Endothelial cell of umbilical vein (primary cell): ENCODE measurements at regions of chr12 and their contacts with region 1.

Region 1: DNA sequence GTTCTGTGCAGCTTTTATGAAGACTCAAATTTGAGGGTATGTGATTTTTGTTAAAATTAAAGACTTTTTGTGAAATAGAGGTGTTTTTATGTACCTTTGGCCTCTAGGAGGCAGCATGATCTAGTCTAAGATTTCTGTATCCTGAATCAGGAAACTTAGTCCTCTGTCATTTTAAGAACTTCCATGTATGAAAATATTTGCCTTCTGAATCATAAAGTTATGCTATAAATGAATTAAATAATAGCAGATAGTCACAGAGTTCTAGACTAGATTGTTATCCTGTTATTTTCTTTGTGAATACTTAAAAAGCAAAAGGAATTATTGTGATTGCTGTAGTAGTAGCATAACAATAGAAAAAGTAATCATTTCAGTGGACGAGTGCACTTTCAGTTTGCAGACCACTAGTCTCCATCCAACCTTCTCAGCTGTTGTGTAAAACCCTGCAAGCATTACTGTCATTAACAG is 56.3 kb downstream of the FGD4 start:
- DNase-seq: peak; percentile 91
- H3K4me3 ChIP-seq: peak overlapping the region in 2 of 3 experiments; percentile 50 to 82
- H3K27ac ChIP-seq: peak overlapping the region; percentile 89
- H3K4me1 ChIP-seq: peaks cover 67% of the 10 kb centered on the region
- H3K27me3 ChIP-seq: no peaks in the 10 kb centered on the region
- CTCF ChIP-seq: peak; percentile 44 to 46
- POLR2A ChIP-seq: peak; percentile 35

Region 2: DNA sequence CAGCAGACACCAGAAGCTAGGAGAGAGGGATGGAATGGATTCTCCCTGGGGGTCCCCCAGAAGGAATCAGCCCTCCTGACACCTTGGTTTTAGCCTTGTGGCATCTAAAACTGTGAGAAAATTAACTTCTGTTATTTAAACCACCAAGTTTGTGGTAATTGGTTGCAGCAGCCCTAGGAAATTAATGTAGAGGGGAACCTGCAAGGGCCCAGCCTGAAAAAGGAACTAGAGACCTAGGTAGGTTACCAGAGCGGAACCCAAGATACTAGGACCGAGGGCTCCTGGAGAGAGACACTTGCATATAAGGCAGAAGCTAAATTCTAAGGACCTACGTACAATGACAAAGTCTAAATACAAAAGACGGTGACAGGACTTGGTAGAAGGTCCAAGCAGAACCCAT is 856.6 kb before region 1 on chr12:
- CTCF ChIA-PET with region 1: no interaction called
- POLR2A ChIA-PET with region 1: no interaction called
- dilution Hi-C with region 1: no loop called
- intact Hi-C with region 1: no loop called
- DNase-seq: no peak
- H3K4me3 ChIP-seq: no peak overlapping the region
- H3K27ac ChIP-seq: no peak overlapping the region
- H3K4me1 ChIP-seq: peaks cover 6% of the 10 kb centered on the region
- H3K27me3 ChIP-seq: peaks cover 0 to 2% of the 10 kb centered on the region in 2 experiments
- CTCF ChIP-seq: no peak
- POLR2A ChIP-seq: no peak

Region 3: GRCh38 chr12:32399337-32400113 is 56.1 kb before region 1 on chr12 and contains the start of gene FGD4:
- CTCF ChIA-PET with region 1: interaction called, 29 read pairs
- POLR2A ChIA-PET with region 1: interaction called, 6 read pairs
- dilution Hi-C with region 1: no loop called
- intact Hi-C with region 1: loop called (anchors 1 kb)
- DNase-seq: peak; percentile 92
- H3K4me3 ChIP-seq: peak within 1 kb of the TSS; percentile 26 to 83 (median 76)
- H3K27ac ChIP-seq: peak within 1 kb of the TSS; percentile 19
- H3K4me1 ChIP-seq: peaks cover 6% of the 10 kb centered on the region
- H3K27me3 ChIP-seq: no peaks in the 10 kb centered on the region
- CTCF ChIP-seq: peak; percentile 60 to 89
- POLR2A ChIP-seq: peak; percentile 62
- total RNA-seq, gene FGD4: 44.7 and 44.8 TPM in 2 replicates

Region 4: GRCh38 chr12:32444895-32445294 is 10.7 kb before region 1 on chr12:
- CTCF ChIA-PET with region 1: interaction called, 3 read pairs
- POLR2A ChIA-PET with region 1: no interaction called
- dilution Hi-C with region 1: no loop called
- intact Hi-C with region 1: loop called (anchors 1 kb)
- DNase-seq: peak; percentile 93
- H3K4me3 ChIP-seq: no peak overlapping the region
- H3K27ac ChIP-seq: peak overlapping the region; percentile 67
- H3K4me1 ChIP-seq: peaks cover 44% of the 10 kb centered on the region
- H3K27me3 ChIP-seq: no peaks in the 10 kb centered on the region
- CTCF ChIP-seq: no peak
- POLR2A ChIP-seq: no peak

Region 5: DNA sequence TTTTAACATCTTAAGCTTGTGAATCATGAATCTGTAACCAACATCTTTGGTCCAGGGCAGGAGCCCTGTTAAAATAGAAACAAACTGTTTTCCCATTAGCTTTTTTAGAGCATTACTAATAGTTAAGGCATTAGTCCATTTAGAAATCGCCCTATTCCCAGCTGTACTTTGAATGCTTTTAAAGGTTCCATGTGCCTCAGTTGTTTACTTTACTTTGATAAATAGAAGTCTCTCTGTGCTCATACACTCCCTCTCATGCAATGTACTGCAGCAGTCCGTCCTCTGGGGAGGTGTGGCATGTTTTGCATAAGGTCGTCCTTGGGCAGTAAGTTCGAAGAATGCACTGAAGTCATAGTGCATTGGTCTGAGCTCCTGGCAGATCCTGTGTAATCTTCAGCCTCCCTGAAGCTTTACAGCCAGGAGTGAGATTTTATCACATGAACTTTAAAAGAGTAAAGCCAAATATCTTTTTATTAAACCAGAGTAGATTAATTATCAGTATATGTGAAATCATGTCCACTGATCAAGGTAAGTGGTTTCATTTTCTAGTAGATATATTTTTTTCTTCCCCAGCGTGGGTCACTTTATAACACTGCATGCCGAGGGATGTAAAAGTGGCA is 78.4 kb after region 1 on chr12:
- CTCF ChIA-PET with region 1: interaction called, 7 read pairs
- POLR2A ChIA-PET with region 1: no interaction called
- dilution Hi-C with region 1: no loop called
- intact Hi-C with region 1: loop called (anchors 1 kb)
- DNase-seq: peak; percentile 89
- H3K4me3 ChIP-seq: peak overlapping the region; percentile 39 to 73 (median 67)
- H3K27ac ChIP-seq: peak overlapping the region; percentile 67
- H3K4me1 ChIP-seq: peaks cover 30% of the 10 kb centered on the region
- H3K27me3 ChIP-seq: no peaks in the 10 kb centered on the region
- CTCF ChIP-seq: no peak
- POLR2A ChIP-seq: peak; percentile 75

Region 6: GRCh38 chr12:32611986-32612385 is 156.3 kb after region 1 on chr12:
- CTCF ChIA-PET with region 1: no interaction called
- POLR2A ChIA-PET with region 1: no interaction called
- dilution Hi-C with region 1: no loop called
- intact Hi-C with region 1: loop called (anchors 2 kb)
- DNase-seq: no peak
- H3K4me3 ChIP-seq: no peak overlapping the region
- H3K27ac ChIP-seq: peak overlapping the region; percentile 68
- H3K4me1 ChIP-seq: peaks cover 16% of the 10 kb centered on the region
- H3K27me3 ChIP-seq: no peaks in the 10 kb centered on the region
- CTCF ChIP-seq: no peak
- POLR2A ChIP-seq: no peak

Region 7: DNA sequence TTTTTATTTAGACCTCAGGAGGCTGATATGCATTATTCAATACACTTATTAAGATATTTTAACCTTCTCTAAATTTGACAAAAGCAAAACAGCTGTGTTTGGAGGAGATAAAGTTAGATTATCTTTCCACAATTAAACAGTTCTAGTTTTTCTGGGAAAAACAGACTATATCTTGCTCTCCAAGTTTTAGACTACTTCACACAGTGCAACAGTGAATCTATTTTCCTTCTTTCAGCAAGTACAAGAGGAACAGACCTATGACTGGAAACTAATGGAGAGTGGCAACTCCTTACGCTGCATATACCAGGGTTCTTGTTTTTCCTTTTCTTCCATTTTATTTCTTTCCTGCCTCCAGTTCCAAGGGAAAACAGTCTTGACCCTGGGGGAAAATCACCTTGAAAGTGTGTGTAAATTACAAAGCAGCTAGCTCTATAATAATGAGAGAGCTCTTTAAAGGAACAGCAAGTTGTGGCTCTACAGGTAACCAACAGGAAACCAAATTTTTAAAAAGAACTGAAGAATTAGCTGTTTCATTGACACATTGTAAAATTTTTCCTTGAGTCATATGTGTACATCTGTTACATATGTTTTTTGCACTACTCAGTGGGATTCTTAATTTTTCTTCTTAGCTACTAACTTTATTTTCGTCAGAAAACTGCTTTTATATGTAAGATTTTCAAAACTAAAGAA is 250.8 kb after region 1 on chr12:
- CTCF ChIA-PET with region 1: no interaction called
- POLR2A ChIA-PET with region 1: no interaction called
- dilution Hi-C with region 1: no loop called
- intact Hi-C with region 1: no loop called
- DNase-seq: no peak
- H3K4me3 ChIP-seq: no peak overlapping the region
- H3K27ac ChIP-seq: no peak overlapping the region
- H3K4me1 ChIP-seq: no peaks in the 10 kb centered on the region
- H3K27me3 ChIP-seq: no peaks in the 10 kb centered on the region
- CTCF ChIP-seq: no peak
- POLR2A ChIP-seq: no peak

Region 8: GRCh38 chr12:32755654-32756475 is 300.2 kb after region 1 on chr12 and contains the start of gene YARS2:
- CTCF ChIA-PET with region 1: interaction called, 19 read pairs
- POLR2A ChIA-PET with region 1: no interaction called
- dilution Hi-C with region 1: no loop called
- intact Hi-C with region 1: loop called (anchors 1 kb)
- DNase-seq: peak; percentile 95
- H3K4me3 ChIP-seq: peak within 1 kb of the TSS; percentile 60 to 90 (median 76)
- H3K27ac ChIP-seq: peak within 1 kb of the TSS; percentile 91
- H3K4me1 ChIP-seq: peaks cover 13% of the 10 kb centered on the region
- H3K27me3 ChIP-seq: no peaks in the 10 kb centered on the region
- CTCF ChIP-seq: peak; percentile 68 to 88
- POLR2A ChIP-seq: peak; percentile 97
- total RNA-seq, gene YARS2: 26.8 and 28.4 TPM in 2 replicates